PC-9 (cell line): ENCODE measurements at regions of chr6 and their contacts with region 1.

Region 1: GRCh38 chr6:9576521-9576920 is 838.4 kb downstream of the TFAP2A start:
- DNase-seq: no peak
- H3K4me3 ChIP-seq: no peak overlapping the region
- H3K27ac ChIP-seq: no peak overlapping the region
- H3K4me1 ChIP-seq: no peaks in the 10 kb centered on the region
- H3K27me3 ChIP-seq: no peaks in the 10 kb centered on the region
- CTCF ChIP-seq: no peak

Region 2: GRCh38 chr6:8131256-8131897 is 1445.1 kb before region 1 on chr6:
- CTCF ChIA-PET with region 1: no interaction called
- POLR2A ChIA-PET with region 1: interaction called, 14 read pairs
- intact Hi-C with region 1: no loop called
- DNase-seq: peak; percentile 45 to 58
- H3K4me3 ChIP-seq: no peak overlapping the region
- H3K27ac ChIP-seq: no peak overlapping the region
- H3K4me1 ChIP-seq: peaks cover 3% of the 10 kb centered on the region; the same call in 1 of the 2 replicates
- H3K27me3 ChIP-seq: no peaks in the 10 kb centered on the region
- CTCF ChIP-seq: peak; percentile 69

Region 3: GRCh38 chr6:9520417-9521151 is 55.9 kb before region 1 on chr6:
- CTCF ChIA-PET with region 1: no interaction called
- POLR2A ChIA-PET with region 1: no interaction called
- intact Hi-C with region 1: no loop called
- DNase-seq: peak in 1 of 2 experiments; percentile 70
- H3K4me3 ChIP-seq: no peak overlapping the region
- H3K27ac ChIP-seq: 0 out of 2 replicates have a peak overlapping the region, but pooled peaks have one; percentile 12
- H3K4me1 ChIP-seq: peaks cover 39% of the 10 kb centered on the region
- H3K27me3 ChIP-seq: no peaks in the 10 kb centered on the region
- CTCF ChIP-seq: no peak

Region 4: GRCh38 chr6:9732056-9732455 is 155.5 kb after region 1 on chr6:
- CTCF ChIA-PET with region 1: no interaction called
- POLR2A ChIA-PET with region 1: no interaction called
- intact Hi-C with region 1: no loop called
- DNase-seq: no peak
- H3K4me3 ChIP-seq: no peak overlapping the region
- H3K27ac ChIP-seq: no peak overlapping the region
- H3K4me1 ChIP-seq: no peaks in the 10 kb centered on the region
- H3K27me3 ChIP-seq: no peaks in the 10 kb centered on the region
- CTCF ChIP-seq: no peak

Region 5: DNA sequence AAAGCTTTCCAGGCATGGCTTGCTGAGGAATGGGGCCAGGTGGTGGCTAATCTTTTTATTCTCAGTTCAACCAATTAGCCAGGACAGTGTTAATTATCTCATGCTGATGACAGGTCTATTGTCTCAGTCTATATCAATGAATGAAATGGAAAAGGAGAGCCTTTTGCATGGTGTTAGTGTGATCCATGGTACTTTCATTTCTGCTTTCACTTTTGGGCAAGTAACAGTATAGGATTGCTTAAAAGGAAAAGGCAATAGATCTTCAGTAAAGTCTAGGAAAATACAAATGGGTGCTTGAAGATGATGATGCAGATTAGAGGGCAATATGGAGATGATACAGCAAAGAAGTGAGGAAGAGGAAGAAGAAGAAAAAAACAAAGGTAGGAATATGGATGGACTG is 408.1 kb after region 1 on chr6:
- CTCF ChIA-PET with region 1: interaction called, 12 read pairs
- POLR2A ChIA-PET with region 1: no interaction called
- intact Hi-C with region 1: no loop called
- DNase-seq: no peak
- H3K4me3 ChIP-seq: no peak overlapping the region
- H3K27ac ChIP-seq: no peak overlapping the region
- H3K4me1 ChIP-seq: no peaks in the 10 kb centered on the region
- H3K27me3 ChIP-seq: no peaks in the 10 kb centered on the region
- CTCF ChIP-seq: no peak